AG04449 (cell line): ENCODE measurements at regions of chr15 and their contacts with region 1.

Region 1: GRCh38 chr15:85504749-85505676 is 124.6 kb downstream of the AKAP13 start:
- DNase-seq: no peak
- H3K4me3 ChIP-seq: no peak overlapping the region
- CTCF ChIP-seq: peak; percentile 34

Region 2: GRCh38 chr15:85296615-85297402 is 208.2 kb before region 1 on chr15:
- CTCF ChIA-PET with region 1: interaction called, 41 read pairs
- POLR2A ChIA-PET with region 1: no interaction called
- DNase-seq: no peak
- H3K4me3 ChIP-seq: peak overlapping the region; percentile 46
- CTCF ChIP-seq: peak; percentile 73

Region 3: DNA sequence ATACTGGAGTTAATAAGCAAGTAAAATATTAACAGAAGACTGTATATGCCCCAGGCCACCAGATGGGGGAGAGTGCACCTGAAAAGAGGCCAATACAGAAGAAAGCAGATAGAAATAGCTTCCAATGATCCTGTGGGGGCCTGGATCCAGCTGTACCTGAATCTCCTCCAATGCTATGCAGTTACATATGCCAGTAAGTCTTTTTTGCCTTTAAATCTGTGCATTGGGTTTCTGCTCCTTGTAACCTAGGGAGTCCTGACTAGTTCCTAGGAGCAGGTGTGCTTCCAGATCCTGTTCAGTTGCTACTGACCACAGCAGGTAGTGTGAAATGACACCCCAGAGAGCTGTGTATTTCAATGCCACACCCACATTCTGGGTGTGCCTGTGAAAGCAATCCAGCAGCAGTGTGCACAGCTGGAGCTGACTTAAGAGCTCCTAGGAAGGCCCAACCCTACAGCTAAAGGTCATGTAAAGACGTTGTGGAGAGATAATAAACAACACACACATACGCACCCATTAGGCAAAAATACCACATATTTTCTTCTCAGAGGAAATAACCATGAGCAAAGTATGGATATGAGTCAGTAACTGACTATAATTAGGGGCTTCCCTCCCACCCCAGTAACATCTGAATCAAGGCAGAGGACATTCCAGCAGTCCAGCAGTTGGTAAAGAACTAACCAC is 186.8 kb before region 1 on chr15:
- CTCF ChIA-PET with region 1: interaction called, 14 read pairs
- POLR2A ChIA-PET with region 1: interaction called, 3 read pairs
- DNase-seq: peak; percentile 76
- H3K4me3 ChIP-seq: no peak overlapping the region
- CTCF ChIP-seq: no peak

Region 4: GRCh38 chr15:85494048-85494793 is 10.8 kb before region 1 on chr15:
- CTCF ChIA-PET with region 1: interaction called, 146 read pairs
- POLR2A ChIA-PET with region 1: no interaction called
- DNase-seq: peak; percentile 46
- H3K4me3 ChIP-seq: no peak overlapping the region
- CTCF ChIP-seq: no peak

Region 5: DNA sequence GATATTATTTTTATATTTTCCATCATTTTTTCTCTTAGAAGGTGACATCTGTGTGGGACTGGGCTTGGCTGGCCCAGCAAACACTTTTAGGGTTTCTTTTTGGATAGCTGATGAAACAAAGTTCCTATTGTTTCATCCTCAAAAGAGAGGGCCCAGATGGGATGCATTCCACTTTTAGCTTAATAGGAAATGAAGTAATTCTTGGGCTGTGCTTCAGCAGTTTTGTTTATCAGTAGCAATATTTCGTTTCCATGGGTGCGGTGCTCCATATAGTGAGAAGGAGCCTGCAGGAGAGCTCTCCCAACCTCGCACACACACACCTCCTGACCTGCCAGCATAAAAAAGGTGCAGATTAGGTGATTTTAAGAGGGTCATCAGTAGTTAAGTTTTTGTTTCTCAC is 22.9 kb after region 1 on chr15:
- CTCF ChIA-PET with region 1: interaction called, 19 read pairs
- POLR2A ChIA-PET with region 1: no interaction called
- DNase-seq: peak; percentile 26
- H3K4me3 ChIP-seq: no peak overlapping the region
- CTCF ChIP-seq: no peak

Region 6: DNA sequence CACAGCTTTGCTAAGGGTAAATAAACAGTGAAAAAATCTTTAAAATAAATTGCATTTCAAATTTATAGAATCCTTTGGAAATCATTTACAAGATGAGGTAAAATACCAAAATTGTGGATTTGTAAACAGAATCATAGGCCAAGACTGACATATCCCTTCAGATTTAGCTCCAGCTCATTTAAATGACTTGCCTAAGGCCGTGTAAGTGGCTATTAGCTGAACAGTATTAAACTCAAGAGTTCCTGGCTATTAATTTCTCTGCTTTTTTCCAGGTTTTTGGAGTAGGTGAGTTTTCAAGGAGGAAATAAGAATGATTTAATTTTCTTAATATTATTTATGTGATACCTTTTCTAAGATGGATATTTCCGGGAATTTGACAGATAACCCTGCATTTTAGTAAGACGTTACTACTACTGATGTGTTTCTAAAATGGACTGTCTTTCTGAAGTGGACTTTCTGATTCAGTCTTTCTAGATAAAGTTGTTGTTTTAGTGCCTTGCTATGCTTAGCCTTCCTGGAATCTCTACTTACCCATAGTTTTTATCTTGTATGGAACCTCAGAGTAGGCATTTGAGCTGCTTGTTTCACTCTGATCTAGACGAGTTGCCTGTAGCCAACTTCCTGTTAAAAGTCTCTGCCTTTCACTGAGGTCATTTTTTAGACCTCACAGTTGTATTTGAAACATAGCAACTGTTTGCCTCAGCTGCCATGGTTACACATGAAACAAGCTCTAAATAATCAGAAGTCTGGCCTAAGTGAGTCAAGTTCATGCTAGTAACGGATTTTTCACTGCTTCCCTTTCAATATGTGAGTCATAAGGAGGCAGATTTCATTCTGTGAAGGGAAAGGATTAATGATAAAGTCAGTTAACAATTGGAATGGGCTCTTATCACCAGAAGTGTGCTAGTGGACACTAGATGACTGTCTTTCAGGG is 162.7 kb after region 1 on chr15:
- CTCF ChIA-PET with region 1: no interaction called
- POLR2A ChIA-PET with region 1: no interaction called
- DNase-seq: peak; percentile 97
- H3K4me3 ChIP-seq: no peak overlapping the region
- CTCF ChIP-seq: no peak

Region 7: GRCh38 chr15:85858586-85859375 is 353.8 kb after region 1 on chr15:
- CTCF ChIA-PET with region 1: no interaction called
- POLR2A ChIA-PET with region 1: no interaction called
- DNase-seq: no peak
- H3K4me3 ChIP-seq: peak overlapping the region; percentile 23
- CTCF ChIP-seq: peak; percentile 83